Calu3 (cell line): ENCODE measurements at regions of chrX and their contacts with region 1.

Region 1: GRCh38 chrX:12701628-12702027 is 89.6 kb upstream of the PRPS2 start:
- DNase-seq: peak; percentile 60
- H3K4me3 Mint-ChIP-seq: no peak overlapping the region
- H3K27ac Mint-ChIP-seq: no peak overlapping the region
- H3K4me1 Mint-ChIP-seq: no peaks in the 10 kb centered on the region
- H3K27me3 Mint-ChIP-seq: peaks cover 25% of the 10 kb centered on the region
- CTCF ChIP-seq: peak; percentile 47

Region 2: GRCh38 chrX:12080265-12080664 is 621.4 kb before region 1 on chrX:
- CTCF ChIA-PET with region 1: interaction called, 5 read pairs
- intact Hi-C with region 1: loop called (anchors 1 kb)
- DNase-seq: peak; percentile 27
- H3K4me3 Mint-ChIP-seq: no peak overlapping the region
- H3K27ac Mint-ChIP-seq: no peak overlapping the region
- H3K4me1 Mint-ChIP-seq: peaks cover 8% of the 10 kb centered on the region
- H3K27me3 Mint-ChIP-seq: no peaks in the 10 kb centered on the region
- CTCF ChIP-seq: peak; percentile 50

Region 3: GRCh38 chrX:12488220-12488619 is 213.4 kb before region 1 on chrX:
- CTCF ChIA-PET with region 1: no interaction called
- intact Hi-C with region 1: no loop called
- DNase-seq: no peak
- H3K4me3 Mint-ChIP-seq: no peak overlapping the region
- H3K27ac Mint-ChIP-seq: no peak overlapping the region
- H3K4me1 Mint-ChIP-seq: no peaks in the 10 kb centered on the region
- H3K27me3 Mint-ChIP-seq: peaks cover 19% of the 10 kb centered on the region
- CTCF ChIP-seq: no peak

Region 4: GRCh38 chrX:12567857-12568256 is 133.8 kb before region 1 on chrX:
- CTCF ChIA-PET with region 1: no interaction called
- intact Hi-C with region 1: loop called (anchors 10 kb)
- DNase-seq: peak; percentile 16
- H3K4me3 Mint-ChIP-seq: no peak overlapping the region
- H3K27ac Mint-ChIP-seq: no peak overlapping the region
- H3K4me1 Mint-ChIP-seq: peaks cover 6% of the 10 kb centered on the region
- H3K27me3 Mint-ChIP-seq: no peaks in the 10 kb centered on the region
- CTCF ChIP-seq: peak; percentile 19

Region 5: GRCh38 chrX:12721042-12721441 is 19.4 kb after region 1 on chrX:
- CTCF ChIA-PET with region 1: no interaction called
- intact Hi-C with region 1: no loop called
- DNase-seq: peak; percentile 5
- H3K4me3 Mint-ChIP-seq: no peak overlapping the region
- H3K27ac Mint-ChIP-seq: no peak overlapping the region
- H3K4me1 Mint-ChIP-seq: peaks cover 8% of the 10 kb centered on the region
- H3K27me3 Mint-ChIP-seq: peaks cover 60% of the 10 kb centered on the region
- CTCF ChIP-seq: no peak

Region 6: GRCh38 chrX:12771445-12772069 is 69.9 kb after region 1 on chrX:
- CTCF ChIA-PET with region 1: interaction called, 17 read pairs
- intact Hi-C with region 1: loop called (anchors 1 kb)
- DNase-seq: peak; percentile 79
- H3K4me3 Mint-ChIP-seq: peak overlapping the region; percentile 31
- H3K27ac Mint-ChIP-seq: no peak overlapping the region
- H3K4me1 Mint-ChIP-seq: no peaks in the 10 kb centered on the region
- H3K27me3 Mint-ChIP-seq: peaks cover 12% of the 10 kb centered on the region
- CTCF ChIP-seq: peak; percentile 88